Activated naive CD4-positive, alpha-beta T cell treated with anti-CD3 and anti-CD28 coated beads for 36 hours (primary cell): ENCODE measurements at regions of chr7 and their contacts with region 1.

Region 1: GRCh38 chr7:100148559-100149350 is at the start of gene LAMTOR4:
- DNase-seq: peak; percentile 100
- H3K4me3 Mint-ChIP-seq: peak within 1 kb of the TSS; percentile 100
- H3K27ac Mint-ChIP-seq: peak within 1 kb of the TSS; percentile 99
- H3K4me1 Mint-ChIP-seq: peaks cover 29% of the 10 kb centered on the region
- H3K27me3 Mint-ChIP-seq: no peaks in the 10 kb centered on the region
- total RNA-seq, gene LAMTOR4: 129 to 135 TPM

Region 2: DNA sequence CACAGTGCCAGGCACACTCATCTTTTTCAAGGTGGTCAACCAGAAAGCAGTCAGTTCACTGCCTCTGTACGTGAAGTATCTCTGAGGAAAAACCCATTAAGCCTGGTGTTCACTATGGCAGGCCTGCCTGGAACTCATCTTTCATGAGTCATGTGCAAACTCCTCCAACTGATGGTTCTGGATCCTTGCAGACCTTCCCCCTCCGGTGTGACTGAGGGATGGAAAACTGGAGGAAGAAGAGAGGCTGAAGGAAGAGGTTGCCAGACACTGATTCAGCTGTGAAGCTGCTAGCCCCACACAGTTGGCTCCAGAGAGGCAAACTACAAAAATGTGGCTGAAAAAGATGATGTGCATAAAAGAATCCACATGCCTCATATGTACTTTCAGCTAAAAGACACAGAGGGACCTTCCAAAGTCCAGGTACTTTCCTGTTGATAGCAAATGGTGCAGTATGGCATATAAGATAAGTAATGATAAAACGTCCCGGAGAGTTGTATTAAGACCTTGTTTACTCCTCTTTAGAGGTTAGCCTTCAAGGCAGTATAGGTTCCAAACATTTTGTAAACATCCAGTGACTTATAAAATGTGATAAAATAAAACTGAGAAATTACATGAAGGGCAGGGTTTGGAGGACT is 471.6 kb before region 1 on chr7:
- CTCF ChIA-PET with region 1: no interaction called
- intact Hi-C with region 1: no loop called
- DNase-seq: no peak
- H3K4me3 Mint-ChIP-seq: no peak overlapping the region
- H3K27ac Mint-ChIP-seq: peak overlapping the region; percentile 51
- H3K4me1 Mint-ChIP-seq: peaks cover 35% of the 10 kb centered on the region
- H3K27me3 Mint-ChIP-seq: no peaks in the 10 kb centered on the region

Region 3: GRCh38 chr7:100003711-100004661 is 144.8 kb before region 1 on chr7:
- CTCF ChIA-PET with region 1: no interaction called
- intact Hi-C with region 1: no loop called
- DNase-seq: no peak
- H3K4me3 Mint-ChIP-seq: no peak overlapping the region
- H3K27ac Mint-ChIP-seq: peak overlapping the region; percentile 56
- H3K4me1 Mint-ChIP-seq: no peaks in the 10 kb centered on the region
- H3K27me3 Mint-ChIP-seq: peaks cover 2% of the 10 kb centered on the region

Region 4: GRCh38 chr7:100101016-100101862 is 47.5 kb before region 1 on chr7 and contains the starts of genes AP4M1 and MCM7:
- CTCF ChIA-PET with region 1: no interaction called
- intact Hi-C with region 1: loop called (anchors 1 kb)
- DNase-seq: peak; percentile 98
- H3K4me3 Mint-ChIP-seq: peak within 1 kb of the TSS; percentile 91
- H3K27ac Mint-ChIP-seq: peak within 1 kb of the TSS; percentile 96
- H3K4me1 Mint-ChIP-seq: peaks cover 40% of the 10 kb centered on the region
- H3K27me3 Mint-ChIP-seq: no peaks in the 10 kb centered on the region
- total RNA-seq, gene AP4M1: 12.6 to 12.7 TPM
- total RNA-seq, gene MCM7: 390 to 395 TPM

Region 5: GRCh38 chr7:100137851-100138760 is 10.6 kb before region 1 on chr7:
- CTCF ChIA-PET with region 1: interaction called, 34 read pairs
- intact Hi-C with region 1: loop called (anchors 1 kb)
- DNase-seq: no peak
- H3K4me3 Mint-ChIP-seq: no peak overlapping the region
- H3K27ac Mint-ChIP-seq: peak overlapping the region; percentile 68
- H3K4me1 Mint-ChIP-seq: peaks cover 12% of the 10 kb centered on the region
- H3K27me3 Mint-ChIP-seq: no peaks in the 10 kb centered on the region

Region 6: DNA sequence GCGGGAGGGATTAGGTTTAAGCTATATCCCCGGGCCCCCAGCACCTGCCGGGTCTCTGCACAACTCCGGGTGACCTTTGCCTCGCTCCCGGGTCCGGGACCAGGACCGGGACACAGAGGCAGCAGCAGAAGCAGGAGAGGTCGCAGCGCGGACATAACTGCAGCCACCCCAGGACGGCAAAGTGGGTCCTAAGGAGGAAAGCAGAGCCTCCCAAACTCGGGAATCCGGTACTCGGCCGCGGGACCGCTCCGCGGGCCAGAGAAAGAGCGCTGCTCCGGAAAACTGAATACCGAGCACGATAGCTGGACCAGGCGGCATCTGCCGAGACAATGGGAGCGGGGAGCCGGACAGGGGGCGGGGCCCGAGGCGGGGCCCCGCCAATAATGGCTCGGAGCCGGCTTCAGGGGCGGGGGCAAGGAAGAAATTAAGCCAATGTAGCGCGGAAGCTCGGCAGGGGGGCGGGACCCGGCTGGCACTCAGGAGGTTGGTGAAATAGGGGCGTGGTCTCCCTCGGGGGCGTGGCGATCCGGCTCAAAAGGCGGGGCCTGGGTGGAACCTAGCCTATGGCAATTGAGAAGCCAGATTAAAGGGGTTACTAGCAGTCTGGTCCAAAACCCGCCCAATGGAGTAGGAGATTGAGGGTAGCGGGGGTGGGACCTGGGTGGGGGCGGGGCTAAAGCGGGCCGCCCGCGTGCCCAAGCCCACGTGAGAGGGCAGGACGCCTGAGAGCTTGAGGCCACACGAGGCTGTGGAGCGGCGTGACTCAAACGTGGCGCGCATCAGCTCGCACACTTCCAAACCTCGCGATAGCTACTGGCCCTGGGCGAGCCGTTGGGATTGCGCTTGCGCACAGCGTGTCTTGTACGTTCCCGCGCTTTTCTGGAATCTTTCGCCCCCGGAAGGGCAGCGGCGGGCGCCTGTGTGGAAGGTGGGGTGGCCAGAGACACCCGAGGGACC is 28.6 kb after region 1 on chr7 and contains the starts of genes GPC2 and STAG3:
- CTCF ChIA-PET with region 1: no interaction called
- intact Hi-C with region 1: loop called (anchors 1 kb)
- DNase-seq: peak; percentile 99
- H3K4me3 Mint-ChIP-seq: peak within 1 kb of the TSS; percentile 80
- H3K27ac Mint-ChIP-seq: peak within 1 kb of the TSS; percentile 30
- H3K4me1 Mint-ChIP-seq: peaks cover 43% of the 10 kb centered on the region
- H3K27me3 Mint-ChIP-seq: no peaks in the 10 kb centered on the region
- total RNA-seq, gene GPC2: 7.6 to 9.5 TPM
- total RNA-seq, gene STAG3: 38.4 to 41.0 TPM

Region 7: DNA sequence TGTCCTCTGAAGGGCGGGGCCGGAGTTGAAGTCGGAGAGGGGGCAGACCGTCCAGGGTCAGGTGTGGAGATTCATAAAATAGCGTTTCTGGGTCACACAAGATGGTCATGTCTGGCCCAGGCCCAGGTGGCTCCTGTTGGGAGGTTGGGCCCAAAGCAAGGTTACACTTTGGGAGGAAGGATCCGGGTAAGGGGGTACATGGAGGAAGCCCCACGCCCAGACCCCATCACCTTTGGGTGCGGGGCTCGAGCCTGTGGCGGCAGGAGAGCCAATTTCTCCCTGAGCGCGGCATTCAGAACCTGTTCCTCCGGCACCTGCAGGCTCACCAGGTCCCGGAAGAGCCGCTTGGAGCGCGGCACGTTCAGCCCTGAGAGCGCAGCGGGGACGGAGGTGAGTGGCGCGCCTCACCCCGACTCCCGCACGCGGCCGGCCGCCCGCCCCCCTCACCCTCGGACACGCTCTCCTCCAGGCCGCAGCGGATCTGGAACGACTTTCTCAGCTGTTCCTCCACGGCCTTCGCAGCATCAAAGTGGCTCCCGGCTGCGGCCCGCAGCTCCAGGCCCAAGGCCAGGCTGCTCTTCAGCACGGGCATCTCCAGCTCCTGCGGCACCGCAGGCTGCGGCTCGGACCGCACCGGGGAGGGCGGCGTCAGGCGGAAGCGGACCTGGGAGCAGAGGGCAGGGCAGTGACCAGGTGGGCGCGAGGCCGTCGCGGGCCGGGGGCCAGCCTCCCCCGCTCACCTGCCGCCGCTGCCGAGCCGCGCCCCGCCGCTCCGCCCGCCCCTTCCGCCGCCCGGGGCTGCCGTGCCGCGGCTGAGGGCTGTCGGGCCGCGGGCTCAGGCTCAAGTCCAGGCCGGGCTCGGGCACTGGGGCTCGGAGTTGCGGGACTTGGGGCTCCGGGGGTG is 286.9 kb after region 1 on chr7:
- CTCF ChIA-PET with region 1: no interaction called
- intact Hi-C with region 1: loop called (anchors 1 kb)
- DNase-seq: peak; percentile 62
- H3K4me3 Mint-ChIP-seq: peak overlapping the region; percentile 94
- H3K27ac Mint-ChIP-seq: peak overlapping the region; percentile 97
- H3K4me1 Mint-ChIP-seq: peaks cover 52% of the 10 kb centered on the region
- H3K27me3 Mint-ChIP-seq: no peaks in the 10 kb centered on the region

Region 8: DNA sequence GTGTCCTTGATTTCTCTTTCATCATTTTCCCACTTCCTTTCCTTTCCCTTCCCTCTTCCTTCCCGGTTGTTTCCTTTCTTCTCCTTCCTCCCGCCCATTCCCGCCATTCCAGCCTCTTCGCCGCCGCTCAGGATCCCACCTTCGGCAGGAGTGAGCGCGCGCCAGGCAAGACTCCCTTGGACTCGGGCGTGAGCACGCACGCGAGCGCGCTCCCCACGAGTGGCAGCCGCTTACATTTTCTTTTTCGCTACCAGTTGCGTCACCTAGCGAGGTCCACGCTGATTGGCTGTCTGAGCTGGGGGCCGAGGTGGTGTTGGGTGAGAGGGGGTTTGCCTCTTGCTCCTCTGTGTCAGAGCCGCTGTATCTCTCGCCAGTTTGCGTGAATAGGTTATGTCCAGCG is 596.4 kb after region 1 on chr7:
- CTCF ChIA-PET with region 1: no interaction called
- intact Hi-C with region 1: no loop called
- DNase-seq: peak; percentile 56
- H3K4me3 Mint-ChIP-seq: peak overlapping the region; percentile 75
- H3K27ac Mint-ChIP-seq: no peak overlapping the region
- H3K4me1 Mint-ChIP-seq: peaks cover 4% of the 10 kb centered on the region
- H3K27me3 Mint-ChIP-seq: peaks cover 13% of the 10 kb centered on the region